GM10248 (cell line): ENCODE measurements at regions of chr7 and their contacts with region 1.

Region 1: GRCh38 chr7:7841027-7841426 is 122.6 kb upstream of the RPA3 start:
- DNase-seq: no peak
- CTCF ChIP-seq: no peak

Region 2: GRCh38 chr7:7861211-7861633 is 20.2 kb after region 1 on chr7:
- CTCF ChIA-PET with region 1: interaction called, 12 read pairs
- POLR2A ChIA-PET with region 1: no interaction called
- DNase-seq: no peak
- CTCF ChIP-seq: no peak

Region 3: GRCh38 chr7:7897949-7898515 is 57.0 kb after region 1 on chr7:
- CTCF ChIA-PET with region 1: no interaction called
- POLR2A ChIA-PET with region 1: no interaction called
- DNase-seq: no peak
- CTCF ChIP-seq: no peak

Region 4: DNA sequence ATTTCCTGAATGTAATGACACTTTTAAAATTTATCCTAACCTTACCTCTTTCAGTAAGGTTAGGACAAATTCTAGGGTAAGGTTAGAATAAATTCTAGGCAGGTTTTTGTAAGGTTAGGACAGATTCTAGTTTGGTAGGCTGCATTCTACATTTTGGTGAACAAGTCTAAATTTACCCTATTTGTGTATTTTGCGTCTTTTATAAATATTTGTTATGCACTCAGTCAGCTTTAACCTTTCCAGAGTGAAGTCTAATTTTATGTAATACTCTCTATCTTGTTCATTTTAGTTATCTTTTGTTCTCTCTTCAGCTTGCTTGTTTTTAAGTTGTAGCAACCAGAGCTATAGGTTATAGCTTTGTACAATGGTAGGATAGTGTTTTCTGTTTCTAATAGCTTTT is 181.6 kb after region 1 on chr7:
- CTCF ChIA-PET with region 1: no interaction called
- POLR2A ChIA-PET with region 1: no interaction called
- DNase-seq: no peak
- CTCF ChIP-seq: no peak